ENCODE measurements at regions of chr11 and their contacts with region 1.

Region 1: DNA sequence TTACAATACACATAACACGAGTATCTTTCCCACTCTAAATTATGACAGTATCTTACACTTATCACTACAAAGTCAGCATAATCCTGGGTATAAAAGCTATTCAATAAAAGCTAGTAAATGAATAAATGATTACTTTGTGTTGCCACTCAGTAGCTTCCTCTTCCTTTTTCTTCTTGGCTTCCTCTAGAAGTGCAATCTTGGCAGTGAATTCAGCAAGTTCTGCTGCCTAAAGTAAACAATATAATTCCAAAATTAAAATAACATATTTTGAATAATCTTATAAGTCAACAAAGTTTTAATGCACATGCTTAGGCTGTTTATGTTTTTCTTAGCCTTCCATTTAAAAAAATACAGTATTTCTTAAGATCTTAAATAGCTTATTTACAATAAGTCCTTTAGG is 60.4 kb downstream of the RDX start:
- DNase-seq: peak; percentile 37
- H3K4me3 ChIP-seq: no peak overlapping the region
- H3K27ac ChIP-seq: no peak overlapping the region
- H3K4me1 ChIP-seq: peaks cover 23% of the 10 kb centered on the region
- H3K27me3 ChIP-seq: no peaks in the 10 kb centered on the region
- CTCF ChIP-seq: no peak
- POLR2A ChIP-seq: no peak

Region 2: GRCh38 chr11:110251837-110252236 is 15.9 kb after region 1 on chr11:
- CTCF ChIA-PET with region 1: interaction called, 4 read pairs
- POLR2A ChIA-PET with region 1: no interaction called
- dilution Hi-C with region 1: no loop called
- intact Hi-C with region 1: loop called (anchors 2 kb)
- DNase-seq: peak; percentile 90
- H3K4me3 ChIP-seq: no peak overlapping the region
- H3K27ac ChIP-seq: peak overlapping the region; percentile 24
- H3K4me1 ChIP-seq: peaks cover 24% of the 10 kb centered on the region
- H3K27me3 ChIP-seq: no peaks in the 10 kb centered on the region
- CTCF ChIP-seq: no peak
- POLR2A ChIP-seq: no peak